IMR-90 (cell line): ENCODE measurements at regions of chr7 and their contacts with region 1.

Region 1: DNA sequence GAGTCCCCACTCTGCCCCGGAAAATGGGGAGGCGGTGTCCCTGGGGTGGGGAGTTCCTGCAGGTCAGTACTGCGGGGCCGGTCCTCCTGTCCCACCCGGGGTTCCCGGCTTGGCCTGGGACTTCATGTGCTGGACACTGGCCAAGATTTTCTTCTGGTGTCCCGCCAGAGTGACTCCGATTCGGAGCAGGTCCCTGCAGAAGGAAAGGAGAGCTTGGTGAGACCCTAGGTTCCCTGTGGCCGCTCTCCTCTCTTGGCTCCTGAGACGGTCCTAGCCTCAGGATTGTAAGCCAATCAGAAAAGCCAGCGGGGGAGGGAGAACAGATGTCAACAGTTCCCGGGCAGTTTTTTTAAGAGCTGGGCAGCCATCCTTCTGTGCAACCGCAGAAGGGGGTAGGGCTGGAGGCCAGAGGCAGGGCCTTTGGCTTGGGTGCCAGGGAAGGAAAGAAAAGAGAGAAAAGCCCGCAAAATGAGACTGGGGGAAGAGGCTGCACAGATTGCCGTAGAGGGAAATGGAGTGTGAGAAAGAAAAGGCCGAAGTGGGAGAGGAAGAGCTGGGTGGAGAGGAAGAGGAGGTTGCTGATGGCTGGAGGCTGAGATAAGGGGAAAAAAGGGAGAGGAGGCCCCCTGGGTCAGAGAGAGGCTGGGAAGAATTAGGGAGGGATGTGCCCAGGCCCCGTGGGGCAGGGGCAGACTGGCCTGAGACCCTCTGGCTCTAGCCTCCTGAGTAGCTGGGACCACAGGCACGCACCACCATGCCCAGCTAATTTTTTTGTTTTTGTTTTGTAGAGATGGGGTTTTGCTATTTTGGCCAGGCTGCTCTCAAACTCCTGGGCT is 23.7 kb downstream of the EPHB4 start:
- DNase-seq: peak; percentile 83
- ATAC-seq: peak; percentile 85
- H3K4me3 ChIP-seq: no peak overlapping the region
- H3K27ac ChIP-seq: peak overlapping the region; percentile 70; the same call in 1 of the 2 replicates
- H3K4me1 ChIP-seq: peaks cover 18% of the 10 kb centered on the region
- H3K27me3 ChIP-seq: no peaks in the 10 kb centered on the region
- CTCF ChIP-seq: no peak
- POLR2A ChIP-seq: no peak
- RAD21 ChIP-seq: no peak

Region 2: GRCh38 chr7:100726996-100727761 is 76.4 kb before region 1 on chr7:
- CTCF ChIA-PET with region 1: interaction called, 5 read pairs
- POLR2A ChIA-PET with region 1: no interaction called
- dilution Hi-C with region 1: no loop called
- in situ Hi-C with region 1: no loop called
- intact Hi-C with region 1: loop called (anchors 5 kb)
- DNase-seq: peak; percentile 61
- ATAC-seq: no peak
- H3K4me3 ChIP-seq: no peak overlapping the region
- H3K27ac ChIP-seq: no peak overlapping the region
- H3K4me1 ChIP-seq: peaks cover 9% of the 10 kb centered on the region
- H3K27me3 ChIP-seq: peaks cover 29% of the 10 kb centered on the region
- CTCF ChIP-seq: no peak
- POLR2A ChIP-seq: no peak
- RAD21 ChIP-seq: no peak

Region 3: DNA sequence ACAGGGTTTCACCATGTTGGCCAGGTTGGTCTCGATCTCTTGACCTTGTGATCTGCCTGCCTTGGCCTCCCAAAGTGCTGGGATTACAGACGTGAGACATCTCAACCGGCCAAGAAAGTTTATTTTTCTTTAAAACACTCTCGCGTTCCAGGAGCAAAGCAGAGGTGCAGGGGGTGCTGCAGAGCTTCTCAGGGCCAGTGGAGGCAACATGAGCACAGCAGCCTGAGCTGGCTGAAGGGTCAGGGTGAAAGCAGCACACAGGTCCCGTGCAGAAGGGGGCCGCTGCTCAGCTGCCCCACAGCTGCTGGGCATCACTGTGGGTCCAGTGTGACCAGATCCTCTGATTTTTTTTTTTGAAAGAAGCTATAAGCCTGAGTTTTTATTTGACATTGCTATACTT is 22.4 kb before region 1 on chr7:
- CTCF ChIA-PET with region 1: interaction called, 3 read pairs
- POLR2A ChIA-PET with region 1: interaction called, 10 read pairs
- dilution Hi-C with region 1: no loop called
- in situ Hi-C with region 1: no loop called
- intact Hi-C with region 1: no loop called
- DNase-seq: no peak
- ATAC-seq: peak; percentile 63
- H3K4me3 ChIP-seq: no peak overlapping the region
- H3K27ac ChIP-seq: no peak overlapping the region
- H3K4me1 ChIP-seq: no peaks in the 10 kb centered on the region
- H3K27me3 ChIP-seq: peaks cover 19% of the 10 kb centered on the region
- CTCF ChIP-seq: no peak
- POLR2A ChIP-seq: no peak
- RAD21 ChIP-seq: no peak

Region 4: GRCh38 chr7:100837099-100837836 is 33.7 kb after region 1 on chr7:
- CTCF ChIA-PET with region 1: no interaction called
- POLR2A ChIA-PET with region 1: no interaction called
- dilution Hi-C with region 1: no loop called
- in situ Hi-C with region 1: no loop called
- intact Hi-C with region 1: loop called (anchors 5 kb)
- DNase-seq: peak; percentile 90
- ATAC-seq: peak; percentile 100
- H3K4me3 ChIP-seq: peak overlapping the region; percentile 33
- H3K27ac ChIP-seq: peak overlapping the region; percentile 87
- H3K4me1 ChIP-seq: no peaks in the 10 kb centered on the region
- H3K27me3 ChIP-seq: no peaks in the 10 kb centered on the region
- CTCF ChIP-seq: no peak
- POLR2A ChIP-seq: no peak
- RAD21 ChIP-seq: no peak

Region 5: DNA sequence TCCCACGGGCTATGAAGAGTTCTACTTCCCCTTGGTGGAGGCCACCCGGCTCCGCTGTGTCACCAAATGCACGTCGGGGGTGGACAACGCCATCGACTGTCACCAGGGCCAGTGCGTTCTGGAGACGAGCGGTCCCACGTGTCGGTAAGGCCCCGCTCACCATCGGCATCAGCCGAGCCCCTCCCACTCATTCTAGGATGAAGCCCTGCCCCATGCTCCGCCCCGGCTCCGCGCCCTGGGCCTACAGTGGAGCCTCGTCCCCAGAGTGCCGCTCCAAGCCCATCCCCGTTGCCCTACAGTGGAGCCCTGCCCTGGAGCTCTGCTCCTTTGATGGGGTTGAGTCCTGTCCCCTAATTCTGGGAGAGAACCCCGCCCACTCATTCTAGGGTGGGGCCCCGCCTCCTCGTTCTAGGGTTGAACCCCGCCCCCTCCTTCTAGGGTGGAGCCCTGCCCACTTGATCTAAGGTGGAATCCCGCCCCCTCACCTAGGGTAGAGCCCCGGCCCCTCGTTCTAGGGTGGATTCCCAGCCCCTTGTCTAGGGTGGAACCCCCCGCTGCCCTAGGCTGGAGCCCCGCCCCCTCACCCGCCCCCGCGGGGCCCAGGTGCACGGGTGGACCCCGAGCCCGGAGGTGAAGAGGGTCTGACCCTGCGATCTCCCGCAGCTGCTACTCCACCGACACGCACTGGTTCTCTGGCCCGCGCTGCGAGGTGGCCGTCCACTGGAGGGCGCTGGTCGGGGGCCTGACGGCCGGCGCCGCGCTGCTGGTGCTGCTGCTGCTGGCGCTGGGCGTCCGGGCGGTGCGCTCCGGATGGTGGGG is 162.3 kb after region 1 on chr7:
- CTCF ChIA-PET with region 1: no interaction called
- POLR2A ChIA-PET with region 1: no interaction called
- dilution Hi-C with region 1: no loop called
- in situ Hi-C with region 1: no loop called
- intact Hi-C with region 1: no loop called
- DNase-seq: no peak
- ATAC-seq: peak; percentile 94
- H3K4me3 ChIP-seq: no peak overlapping the region
- H3K27ac ChIP-seq: no peak overlapping the region
- H3K4me1 ChIP-seq: no peaks in the 10 kb centered on the region
- H3K27me3 ChIP-seq: peaks cover 53% of the 10 kb centered on the region
- CTCF ChIP-seq: peak; percentile 81
- POLR2A ChIP-seq: no peak
- RAD21 ChIP-seq: peak; percentile 72